Activated T-helper 2 cell treated with anti-CD3 and anti-CD28 coated beads, Interferon-gamma antibody, Interleukin-2, Interleukin-4, amounts not matched to agents 10 μg/mL and 5 μg/mL and 100 μg/mL, durations not matched to agents 14 hours and 24 hours and 36 hours (primary cell): ENCODE measurements at regions of chr1 and their contacts with region 1.

Region 1: GRCh38 chr1:43763497-43763973 is 56.2 kb downstream of the ST3GAL3 start:
- DNase-seq: peak; percentile 24
- H3K4me3 Mint-ChIP-seq: no peak overlapping the region
- H3K27ac Mint-ChIP-seq: no peak overlapping the region
- H3K4me1 Mint-ChIP-seq: peaks cover 1% of the 10 kb centered on the region
- H3K27me3 Mint-ChIP-seq: no peaks in the 10 kb centered on the region

Region 2: GRCh38 chr1:43622471-43622870 is 141.1 kb before region 1 on chr1:
- intact Hi-C with region 1: no loop called
- DNase-seq: no peak
- H3K4me3 Mint-ChIP-seq: no peak overlapping the region
- H3K27ac Mint-ChIP-seq: no peak overlapping the region
- H3K4me1 Mint-ChIP-seq: no peaks in the 10 kb centered on the region
- H3K27me3 Mint-ChIP-seq: no peaks in the 10 kb centered on the region

Region 3: GRCh38 chr1:43776043-43776761 is 12.7 kb after region 1 on chr1:
- intact Hi-C with region 1: no loop called
- DNase-seq: no peak
- H3K4me3 Mint-ChIP-seq: no peak overlapping the region
- H3K27ac Mint-ChIP-seq: no peak overlapping the region
- H3K4me1 Mint-ChIP-seq: peaks cover 15% of the 10 kb centered on the region
- H3K27me3 Mint-ChIP-seq: no peaks in the 10 kb centered on the region

Region 4: DNA sequence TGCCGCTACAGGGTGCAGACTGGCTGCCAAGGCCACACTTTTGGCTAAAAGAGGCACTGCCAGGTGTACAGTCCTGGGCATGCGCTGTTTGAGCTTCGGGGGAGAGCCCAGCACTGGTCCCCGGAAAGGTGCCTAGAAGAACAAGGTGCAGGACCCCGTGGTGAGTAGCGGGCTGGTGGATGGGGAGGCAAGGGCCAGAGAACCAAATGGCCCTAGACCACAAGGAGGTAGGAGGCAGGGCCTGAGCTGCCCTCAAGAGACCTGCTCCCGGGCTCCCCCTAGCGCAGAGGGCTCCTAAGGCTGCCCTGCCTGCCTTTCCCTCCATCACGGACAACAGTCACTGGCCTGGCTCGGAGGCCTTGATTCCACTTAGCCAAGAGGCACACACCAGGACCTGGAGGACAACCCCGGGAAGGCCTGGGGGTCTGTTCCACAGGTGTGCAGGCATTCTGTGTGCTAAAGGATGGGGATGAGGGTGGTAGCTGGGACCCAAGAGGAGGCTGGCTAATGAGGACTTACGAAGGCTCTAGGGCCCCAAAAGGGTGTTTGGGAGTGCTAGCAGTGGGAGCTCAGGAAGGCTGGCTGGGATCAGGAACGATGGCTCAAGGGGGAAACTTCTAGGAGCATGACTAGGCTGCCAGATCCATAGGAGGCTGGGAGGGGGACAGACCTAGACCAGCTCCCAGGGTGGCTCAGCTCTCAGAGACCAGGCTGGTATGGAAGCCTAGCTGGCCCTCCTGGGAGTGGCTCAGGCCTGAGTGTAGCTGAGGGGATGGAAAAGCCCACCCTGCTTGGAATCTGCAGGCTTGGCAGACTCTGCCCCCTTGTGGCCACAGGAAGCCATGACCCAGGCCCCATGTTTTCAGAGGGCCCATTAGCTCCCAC is 170.8 kb after region 1 on chr1:
- intact Hi-C with region 1: loop called (anchors 1 kb)
- DNase-seq: peak; percentile 33
- H3K4me3 Mint-ChIP-seq: no peak overlapping the region
- H3K27ac Mint-ChIP-seq: no peak overlapping the region
- H3K4me1 Mint-ChIP-seq: peaks cover 11% of the 10 kb centered on the region
- H3K27me3 Mint-ChIP-seq: peaks cover 10% of the 10 kb centered on the region

Region 5: GRCh38 chr1:44029906-44030604 is 266.5 kb after region 1 on chr1:
- intact Hi-C with region 1: loop called (anchors 2 kb)
- DNase-seq: peak; percentile 86
- H3K4me3 Mint-ChIP-seq: peak overlapping the region; percentile 90
- H3K27ac Mint-ChIP-seq: peak overlapping the region; percentile 90
- H3K4me1 Mint-ChIP-seq: peaks cover 29% of the 10 kb centered on the region
- H3K27me3 Mint-ChIP-seq: no peaks in the 10 kb centered on the region